ENCODE measurements at regions of chr3 and their contacts with region 1.

Region 1: DNA sequence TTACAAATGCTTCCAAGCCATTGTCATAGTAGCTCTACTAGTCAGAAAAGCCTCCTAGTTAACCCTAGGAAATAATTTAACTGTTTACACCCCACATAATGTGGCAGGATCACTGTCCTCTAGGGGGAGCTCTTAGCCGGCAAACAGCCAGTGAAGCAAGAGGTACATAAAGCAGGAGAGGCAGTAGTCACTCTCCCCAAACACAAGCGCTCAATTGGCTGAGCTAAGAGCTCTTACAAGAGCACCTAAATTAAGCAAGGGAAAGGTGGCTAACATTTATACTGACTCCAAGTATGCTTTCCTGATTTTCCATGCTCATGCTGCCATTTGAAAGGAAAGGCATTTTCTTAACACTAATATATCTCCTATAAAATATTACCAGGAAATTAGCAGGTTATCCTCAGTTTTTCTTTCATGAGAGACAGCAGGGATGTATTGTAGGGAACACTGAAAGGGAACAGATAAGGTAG is 37.6 kb downstream of the NCEH1 start:
- DNase-seq: peak; percentile 51 to 85
- ATAC-seq: peak; percentile 86 to 96; a peak in 5 of 6 replicates
- H3K4me3 ChIP-seq: no peak overlapping the region
- H3K27ac ChIP-seq: peak overlapping the region; percentile 54 to 77
- H3K4me1 ChIP-seq: peaks cover 35% of the 10 kb centered on the region
- CTCF ChIP-seq: peak; percentile 85
- EP300 ChIP-seq: no peak
- POLR2A ChIP-seq: no peak
- RAD21 ChIP-seq: peak; percentile 79 to 81

Region 2: GRCh38 chr3:172622916-172623700 is 50.1 kb before region 1 on chr3:
- CTCF ChIA-PET with region 1: interaction called, 30 read pairs
- POLR2A ChIA-PET with region 1: interaction called, 10 read pairs
- DNase-seq: peak in 1 of 2 experiments; percentile 44
- ATAC-seq: peak; percentile 56 to 76; a peak in 3 of 6 replicates
- H3K4me3 ChIP-seq: peak overlapping the region; percentile 63
- H3K27ac ChIP-seq: peak overlapping the region; percentile 89 to 97
- H3K4me1 ChIP-seq: peaks cover 40% of the 10 kb centered on the region
- CTCF ChIP-seq: peak; percentile 70
- EP300 ChIP-seq: no peak
- POLR2A ChIP-seq: no peak
- RAD21 ChIP-seq: peak in 1 of 2 experiments; percentile 34; a peak in 1 of 5 replicates

Region 3: DNA sequence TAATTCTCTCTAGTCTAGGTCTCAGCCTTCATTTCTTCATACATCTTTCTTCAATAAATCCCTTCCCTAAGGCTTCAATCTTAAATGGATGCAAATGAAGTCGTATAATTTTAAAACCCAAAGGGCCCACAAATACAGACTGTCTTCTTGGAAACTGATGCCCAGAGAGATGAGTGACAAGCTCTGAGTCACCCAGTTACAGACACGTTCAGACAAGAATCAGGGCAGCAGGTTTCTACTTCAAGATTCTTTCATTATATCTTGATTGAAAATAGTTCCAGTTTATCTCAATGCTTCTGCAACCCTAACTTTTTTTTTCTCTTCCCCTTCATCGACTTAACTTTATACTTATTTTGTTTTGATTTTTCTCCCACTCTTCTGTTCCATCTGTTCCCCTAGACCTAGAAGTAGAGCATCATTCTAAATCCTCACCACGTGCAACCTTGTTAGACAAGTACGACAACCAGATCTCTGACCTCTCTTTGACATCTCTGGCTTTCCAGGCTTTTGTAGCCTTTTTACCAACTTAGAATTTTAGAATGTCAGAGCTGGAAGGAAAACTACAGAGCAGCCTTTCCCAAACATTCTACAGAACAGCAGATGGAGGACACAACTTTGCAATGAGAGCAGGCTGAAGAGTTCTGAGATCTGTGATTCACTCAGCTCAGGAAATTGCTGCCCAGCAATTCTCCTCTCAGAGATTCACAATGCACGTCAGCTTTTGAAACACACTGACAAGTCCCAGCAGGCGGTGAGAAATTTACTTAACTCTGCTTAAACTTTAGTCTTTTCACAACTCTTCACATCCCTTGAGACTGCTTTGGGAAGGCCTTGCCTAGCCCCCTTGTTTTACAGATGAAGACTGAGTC is 12.3 kb after region 1 on chr3:
- CTCF ChIA-PET with region 1: interaction called, 23 read pairs
- POLR2A ChIA-PET with region 1: interaction called, 3 read pairs
- DNase-seq: no peak
- ATAC-seq: 0 out of 6 replicates have a peak, but pooled peaks of 1 of the 2 experiments have one; percentile 21
- H3K4me3 ChIP-seq: no peak overlapping the region
- H3K27ac ChIP-seq: peak overlapping the region in 1 of 2 experiments; percentile 58; a peak in 3 of 6 replicates
- H3K4me1 ChIP-seq: peaks cover 22% of the 10 kb centered on the region
- CTCF ChIP-seq: no peak
- EP300 ChIP-seq: no peak
- POLR2A ChIP-seq: no peak
- RAD21 ChIP-seq: no peak

Region 4: GRCh38 chr3:172705170-172705569 is 31.9 kb after region 1 on chr3:
- CTCF ChIA-PET with region 1: interaction called, 12 read pairs
- POLR2A ChIA-PET with region 1: no interaction called
- DNase-seq: no peak
- ATAC-seq: no peak
- H3K4me3 ChIP-seq: no peak overlapping the region
- H3K27ac ChIP-seq: no peak overlapping the region
- H3K4me1 ChIP-seq: peaks cover 33% of the 10 kb centered on the region
- CTCF ChIP-seq: no peak
- EP300 ChIP-seq: no peak
- POLR2A ChIP-seq: no peak
- RAD21 ChIP-seq: no peak

Region 5: GRCh38 chr3:172710664-172711453 is 37.6 kb after region 1 on chr3 and contains the start of gene NCEH1:
- CTCF ChIA-PET with region 1: interaction called, 17 read pairs
- POLR2A ChIA-PET with region 1: no interaction called
- DNase-seq: peak; percentile 95 to 98
- ATAC-seq: peak; percentile 97 to 98
- H3K4me3 ChIP-seq: peak within 1 kb of the TSS; percentile 92
- H3K27ac ChIP-seq: peak within 1 kb of the TSS; percentile 86 to 93
- H3K4me1 ChIP-seq: peaks cover 38% of the 10 kb centered on the region
- CTCF ChIP-seq: peak; percentile 87
- EP300 ChIP-seq: peak in 1 of 2 experiments; percentile 30; a peak in 1 of 5 replicates
- POLR2A ChIP-seq: peak; percentile 97
- RAD21 ChIP-seq: peak; percentile 76 to 84
- polyA plus RNA-seq, gene NCEH1: 32.2 and 33.2 TPM in 2 replicates

Region 6: GRCh38 chr3:172965256-172965655 is 292.0 kb after region 1 on chr3:
- CTCF ChIA-PET with region 1: no interaction called
- POLR2A ChIA-PET with region 1: no interaction called
- DNase-seq: no peak
- ATAC-seq: no peak
- H3K4me3 ChIP-seq: no peak overlapping the region
- H3K27ac ChIP-seq: no peak overlapping the region
- H3K4me1 ChIP-seq: no peaks in the 10 kb centered on the region
- CTCF ChIP-seq: no peak
- EP300 ChIP-seq: no peak
- POLR2A ChIP-seq: no peak
- RAD21 ChIP-seq: no peak

Measured in A549 (cell line).